HCT116 (cell line): ENCODE measurements at regions of chr1 and their contacts with region 1.

Region 1: DNA sequence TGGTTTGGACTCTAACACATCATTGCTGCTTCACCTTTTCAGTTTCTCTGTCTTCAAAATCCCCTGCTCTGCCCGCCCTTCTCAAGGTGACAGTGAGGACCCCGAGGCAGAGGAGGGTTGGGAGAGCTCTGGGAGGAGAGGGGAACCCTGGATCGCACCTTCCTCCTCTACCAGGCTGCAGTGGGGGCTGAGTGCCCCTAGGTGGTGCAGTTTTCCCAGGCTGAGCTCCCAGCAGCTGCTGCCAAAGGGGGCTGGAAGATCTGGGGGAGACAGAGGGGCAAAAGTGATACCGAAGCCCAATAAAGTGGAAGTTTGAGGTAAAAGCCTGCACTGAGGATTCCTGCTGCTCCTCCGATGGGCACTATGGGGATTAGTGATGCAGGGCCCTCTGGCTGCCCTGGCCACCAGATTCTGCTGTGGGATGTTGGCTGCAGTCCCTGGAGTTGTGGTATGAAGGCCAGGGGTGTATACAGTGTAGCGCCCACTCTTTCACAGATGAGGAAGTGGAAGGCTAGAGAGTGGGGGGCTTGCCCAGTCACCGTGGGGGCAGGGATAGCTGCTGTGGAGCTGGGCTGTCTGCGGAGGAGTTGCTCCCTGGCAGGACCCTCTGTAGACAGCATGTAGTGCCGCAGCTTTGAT is 40.7 kb upstream of the SCMH1 start:
- DNase-seq: peak; percentile 7
- ATAC-seq: peak; percentile 94
- H3K4me3 ChIP-seq: no peak overlapping the region
- H3K27ac ChIP-seq: no peak overlapping the region
- H3K4me1 ChIP-seq: peaks cover 0 to 5% of the 10 kb centered on the region in 2 experiments; a peak in 2 of 4 replicates
- H3K27me3 ChIP-seq: peaks cover 25% of the 10 kb centered on the region; the same call in 1 of the 2 replicates
- CTCF ChIP-seq: peak; percentile 78 to 94 (median 88); a peak in 5 of 6 replicates
- POLR2A ChIP-seq: no peak
- RAD21 ChIP-seq: peak; percentile 85

Region 2: DNA sequence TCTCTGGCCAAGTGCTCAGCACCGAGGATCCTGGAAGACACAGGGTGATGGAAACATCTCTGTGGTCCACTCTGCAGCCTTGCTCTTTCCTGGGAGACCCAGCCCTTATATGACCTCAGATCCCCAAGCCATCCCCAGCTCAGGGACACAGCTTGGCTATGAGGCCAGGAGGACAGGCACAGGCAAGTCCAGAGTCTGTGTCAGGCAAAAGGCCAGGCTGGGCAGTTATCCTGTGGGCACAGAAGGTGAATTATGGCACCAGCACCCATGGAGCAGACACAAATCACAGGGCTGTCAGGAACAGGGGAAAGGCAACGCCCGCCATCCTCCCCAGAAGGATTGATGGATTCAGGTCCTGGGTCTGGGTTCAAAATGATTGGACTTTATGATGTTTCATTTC is 11.4 kb after region 1 on chr1:
- CTCF ChIA-PET with region 1: interaction called, 11 read pairs
- POLR2A ChIA-PET with region 1: no interaction called
- RAD21 ChIA-PET with region 1: no interaction called
- intact Hi-C with region 1: no loop called
- DNase-seq: no peak
- ATAC-seq: no peak
- H3K4me3 ChIP-seq: no peak overlapping the region
- H3K27ac ChIP-seq: no peak overlapping the region
- H3K4me1 ChIP-seq: no peaks in the 10 kb centered on the region
- H3K27me3 ChIP-seq: peaks cover 27% of the 10 kb centered on the region
- CTCF ChIP-seq: no peak
- POLR2A ChIP-seq: no peak
- RAD21 ChIP-seq: no peak

Region 3: DNA sequence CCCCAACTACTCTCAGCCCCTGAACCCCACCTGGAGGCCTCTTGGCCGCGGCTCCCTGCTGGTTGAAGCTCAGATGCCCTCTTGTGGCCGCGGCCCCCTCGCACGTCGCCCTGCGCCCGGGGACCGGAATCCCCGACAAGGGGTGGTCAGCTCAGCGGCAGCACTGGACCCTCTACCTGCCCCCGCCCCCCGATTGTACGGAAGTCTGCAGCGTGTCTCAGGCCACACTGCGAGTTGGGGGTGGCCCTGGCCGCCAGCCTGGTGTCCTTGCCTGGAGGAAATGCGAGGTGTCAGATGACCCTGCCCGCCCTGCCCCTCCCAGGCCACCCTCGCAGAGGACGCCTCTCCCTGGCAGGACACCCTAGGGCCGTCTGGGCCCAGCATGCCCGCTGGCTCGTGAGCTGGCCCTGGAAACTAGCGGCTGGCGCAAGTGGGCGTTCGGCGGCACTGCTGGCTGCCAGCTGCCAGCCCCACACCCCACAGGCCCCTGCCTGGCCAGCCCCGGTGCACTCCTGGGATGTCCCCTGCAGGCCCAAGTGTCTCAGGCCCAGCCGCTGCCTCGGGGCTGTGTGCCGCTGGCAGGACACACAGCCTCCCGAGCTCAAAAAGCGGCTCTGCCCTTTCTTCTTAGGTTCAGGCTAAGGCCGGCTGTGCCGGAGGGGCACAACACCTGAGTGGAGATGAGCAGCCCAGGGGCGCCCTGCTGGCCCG is 140.9 kb after region 1 on chr1:
- CTCF ChIA-PET with region 1: interaction called, 27 read pairs
- POLR2A ChIA-PET with region 1: interaction called, 5 read pairs
- RAD21 ChIA-PET with region 1: interaction called, 6 to 9 read pairs
- intact Hi-C with region 1: no loop called
- DNase-seq: no peak
- ATAC-seq: peak; percentile 50
- H3K4me3 ChIP-seq: peak overlapping the region; percentile 15 to 26
- H3K27ac ChIP-seq: peak overlapping the region; percentile 16; the same call in 1 of the 2 replicates
- H3K4me1 ChIP-seq: peaks cover 7 to 24% of the 10 kb centered on the region in 2 experiments; a peak in 3 of 4 replicates
- H3K27me3 ChIP-seq: no peaks in the 10 kb centered on the region
- CTCF ChIP-seq: peak; percentile 63 to 81 (median 64)
- POLR2A ChIP-seq: no peak
- RAD21 ChIP-seq: peak; percentile 65

Region 4: GRCh38 chr1:41432481-41433280 is 149.9 kb after region 1 on chr1:
- CTCF ChIA-PET with region 1: interaction called, 12 read pairs
- POLR2A ChIA-PET with region 1: no interaction called
- RAD21 ChIA-PET with region 1: interaction called, 3 to 4 read pairs
- intact Hi-C with region 1: loop called (anchors 5 kb)
- DNase-seq: peak; percentile 75
- ATAC-seq: peak; percentile 96
- H3K4me3 ChIP-seq: peak overlapping the region in 1 of 2 experiments; percentile 28; a peak in 2 of 4 replicates
- H3K27ac ChIP-seq: peak overlapping the region; percentile 10; the same call in 1 of the 2 replicates
- H3K4me1 ChIP-seq: peaks cover 14 to 22% of the 10 kb centered on the region in 2 experiments
- H3K27me3 ChIP-seq: peaks cover 16% of the 10 kb centered on the region; the same call in 1 of the 2 replicates
- CTCF ChIP-seq: peak; percentile 85 to 96 (median 92)
- POLR2A ChIP-seq: no peak
- RAD21 ChIP-seq: peak; percentile 99